Breast epithelium (tissue), 4 donors: ENCODE measurements at regions of chr9 and their contacts with region 1.

Region 1: GRCh38 chr9:81767921-81768320 is 78.6 kb upstream of the TLE1 start:
- DNase-seq: no peak
- H3K4me3 ChIP-seq: no peak overlapping the region
- H3K27ac ChIP-seq: no peak overlapping the region
- H3K4me1 ChIP-seq: no peaks in the 10 kb centered on the region
- H3K27me3 ChIP-seq: no peaks in the 10 kb centered on the region
- CTCF ChIP-seq: no peak
- POLR2A ChIP-seq: no peak

Region 2: GRCh38 chr9:79847074-79847473 is 1920.8 kb before region 1 on chr9:
- intact Hi-C with region 1: loop called (anchors 5 kb)
- DNase-seq: no peak
- H3K4me3 ChIP-seq: no peak overlapping the region
- H3K27ac ChIP-seq: no peak overlapping the region
- H3K4me1 ChIP-seq: no peaks in the 10 kb centered on the region
- H3K27me3 ChIP-seq: no peaks in the 10 kb centered on the region
- CTCF ChIP-seq: no peak
- POLR2A ChIP-seq: no peak